ENCODE measurements at regions of chr7 and their contacts with region 1.

Region 1: GRCh38 chr7:139016931-139017511 is 18.8 kb downstream of the ZC3HAV1L start:
- DNase-seq: peak; percentile 73
- H3K4me3 ChIP-seq: no peak overlapping the region
- H3K27ac ChIP-seq: no peak overlapping the region
- H3K4me1 ChIP-seq: no peaks in the 10 kb centered on the region
- CTCF ChIP-seq: peak; percentile 86

Region 2: DNA sequence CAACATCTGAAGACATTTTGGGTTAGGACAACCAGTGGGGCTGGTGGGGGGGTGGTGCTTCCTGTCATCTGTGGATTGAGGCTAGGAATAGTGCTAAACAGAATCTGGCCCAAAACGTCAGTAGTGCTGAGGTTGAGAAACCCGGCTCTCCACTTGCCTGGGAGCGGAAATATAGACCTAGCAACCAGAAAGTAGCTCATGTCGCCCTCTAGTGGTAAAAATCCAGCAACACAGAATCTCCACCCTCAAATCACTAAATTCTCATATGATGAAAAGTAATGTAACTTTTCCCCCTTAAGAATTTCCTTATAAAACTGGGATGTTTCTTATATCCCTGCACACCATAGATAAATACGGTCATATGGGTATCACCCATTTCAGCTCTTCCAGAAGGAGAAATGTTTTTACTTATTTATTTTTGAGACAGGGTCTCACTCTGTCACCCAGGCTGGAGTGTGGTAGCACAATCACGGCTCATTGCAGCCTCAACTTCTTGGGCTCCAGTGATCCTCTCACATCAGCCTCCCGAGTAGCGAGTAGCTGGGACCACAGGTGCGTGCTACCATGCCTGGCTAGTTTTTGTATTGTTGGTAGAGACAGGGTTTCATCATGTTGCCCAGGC is 58.1 kb after region 1 on chr7:
- CTCF ChIA-PET with region 1: no interaction called
- POLR2A ChIA-PET with region 1: no interaction called
- intact Hi-C with region 1: loop called (anchors 1 kb)
- DNase-seq: peak; percentile 80
- H3K4me3 ChIP-seq: no peak overlapping the region
- H3K27ac ChIP-seq: no peak overlapping the region
- H3K4me1 ChIP-seq: peaks cover 4% of the 10 kb centered on the region
- CTCF ChIP-seq: peak; percentile 92

Region 3: DNA sequence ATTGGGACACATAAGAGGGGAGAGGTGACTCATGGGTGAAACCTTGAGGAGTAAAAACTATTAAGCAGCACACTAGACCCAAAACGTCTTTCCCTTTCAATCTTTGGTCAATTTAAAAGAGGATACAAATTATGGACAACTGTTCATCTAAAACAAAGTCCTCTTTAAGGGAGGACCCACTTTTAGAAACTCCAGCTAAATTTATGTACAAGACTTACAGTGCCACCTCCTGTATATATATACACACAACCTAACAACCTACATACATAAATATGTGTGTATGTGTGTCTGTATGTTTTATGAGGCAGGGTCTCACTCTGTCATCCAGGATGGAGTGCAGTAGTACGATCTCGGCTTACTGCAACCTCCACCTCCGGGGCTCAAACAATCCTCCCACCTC is 110.6 kb after region 1 on chr7:
- CTCF ChIA-PET with region 1: no interaction called
- POLR2A ChIA-PET with region 1: interaction called, 3 read pairs
- intact Hi-C with region 1: loop called (anchors 1 kb)
- DNase-seq: peak; percentile 35
- H3K4me3 ChIP-seq: no peak overlapping the region
- H3K27ac ChIP-seq: no peak overlapping the region
- H3K4me1 ChIP-seq: peaks cover 10% of the 10 kb centered on the region
- CTCF ChIP-seq: peak; percentile 61